ENCODE measurements at regions of chr3 and their contacts with region 1.

Region 1: DNA sequence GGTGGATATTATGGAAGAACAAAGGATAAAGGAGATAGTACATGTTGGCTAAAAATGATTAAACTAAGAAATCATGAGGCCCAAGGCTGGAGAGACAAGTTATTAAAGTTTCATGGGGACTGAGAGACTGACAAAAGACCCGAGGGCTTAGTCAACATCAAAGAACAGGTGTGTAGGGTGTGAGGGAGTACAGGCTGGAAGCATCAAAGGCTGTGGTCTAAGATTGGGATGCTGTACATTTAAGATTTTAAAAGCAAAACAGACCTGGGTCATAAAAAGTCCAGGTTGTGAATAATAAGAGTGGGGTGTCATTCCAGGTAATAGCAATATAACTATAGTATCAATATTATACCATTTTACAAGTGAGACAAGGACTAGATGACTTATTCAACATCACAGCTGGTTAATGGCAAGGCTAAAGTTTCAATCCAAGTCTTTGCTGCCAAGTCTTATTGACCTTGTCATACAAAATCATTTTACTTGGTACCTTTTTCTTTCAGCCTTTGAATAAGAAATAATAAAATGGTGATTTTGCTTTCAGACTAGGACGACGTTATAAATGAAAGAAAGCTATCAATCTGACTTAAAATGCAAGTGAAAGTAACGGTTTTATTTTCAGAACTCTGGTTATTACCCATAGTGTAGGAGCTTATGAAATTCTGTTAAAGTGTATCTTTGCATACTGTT is 211.6 kb downstream of the TNIK start:
- DNase-seq: no peak
- ATAC-seq: no peak

Region 2: GRCh38 chr3:172129870-172130683 is 881.5 kb after region 1 on chr3:
- intact Hi-C with region 1: loop called (anchors 10 kb)
- DNase-seq: peak; percentile 89
- ATAC-seq: peak; percentile 95

Measured in sciatic nerve (tissue), 2 donors.